Dorsolateral prefrontal cortex (tissue), 120 donors: ENCODE measurements at regions of chr10 and their contacts with region 1.

Region 1: DNA sequence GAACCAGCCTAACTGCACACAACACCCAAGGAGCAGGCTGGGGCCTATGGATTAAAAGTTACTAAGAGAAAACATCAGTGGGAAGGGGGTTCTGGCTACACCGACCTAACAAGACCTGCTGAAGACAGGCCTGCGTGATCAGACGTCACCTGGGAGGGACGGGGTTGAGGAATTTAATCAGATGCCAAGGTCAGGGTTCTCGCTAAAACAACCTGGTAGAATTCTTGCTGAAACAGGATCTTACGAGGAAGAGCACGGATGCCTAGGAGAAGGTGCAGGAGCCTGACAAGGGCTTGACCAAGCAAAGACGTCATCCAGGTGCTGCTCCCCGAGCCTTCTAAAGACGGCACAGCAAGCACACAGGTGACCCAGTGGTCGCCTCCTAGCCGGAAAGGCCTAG is 1.6 kb downstream of the IDI2 start:
- DNase-seq: no peak
- H3K4me3 ChIP-seq: no peak overlapping the region
- H3K27ac ChIP-seq: no peak overlapping the region
- H3K27me3 ChIP-seq: no peaks in the 10 kb centered on the region
- CTCF ChIP-seq: no peak

Region 2: GRCh38 chr10:1074748-1075308 is 50.7 kb after region 1 on chr10:
- intact Hi-C with region 1: loop called in 1 of 2 experiments (anchors 2 kb)
- DNase-seq: no peak
- H3K4me3 ChIP-seq: no peak overlapping the region
- H3K27ac ChIP-seq: no peak overlapping the region
- H3K27me3 ChIP-seq: no peaks in the 10 kb centered on the region
- CTCF ChIP-seq: peak in 27 of 56 donors; percentile 8 to 53 (median 25)